ENCODE measurements at regions of chrX and their contacts with region 1.

Region 1: GRCh38 chrX:110167952-110168451 is 149.9 kb downstream of the AMMECR1 start:
- DNase-seq: peak in 7 of 10 donors; percentile 32 to 90 (median 39)

Region 2: DNA sequence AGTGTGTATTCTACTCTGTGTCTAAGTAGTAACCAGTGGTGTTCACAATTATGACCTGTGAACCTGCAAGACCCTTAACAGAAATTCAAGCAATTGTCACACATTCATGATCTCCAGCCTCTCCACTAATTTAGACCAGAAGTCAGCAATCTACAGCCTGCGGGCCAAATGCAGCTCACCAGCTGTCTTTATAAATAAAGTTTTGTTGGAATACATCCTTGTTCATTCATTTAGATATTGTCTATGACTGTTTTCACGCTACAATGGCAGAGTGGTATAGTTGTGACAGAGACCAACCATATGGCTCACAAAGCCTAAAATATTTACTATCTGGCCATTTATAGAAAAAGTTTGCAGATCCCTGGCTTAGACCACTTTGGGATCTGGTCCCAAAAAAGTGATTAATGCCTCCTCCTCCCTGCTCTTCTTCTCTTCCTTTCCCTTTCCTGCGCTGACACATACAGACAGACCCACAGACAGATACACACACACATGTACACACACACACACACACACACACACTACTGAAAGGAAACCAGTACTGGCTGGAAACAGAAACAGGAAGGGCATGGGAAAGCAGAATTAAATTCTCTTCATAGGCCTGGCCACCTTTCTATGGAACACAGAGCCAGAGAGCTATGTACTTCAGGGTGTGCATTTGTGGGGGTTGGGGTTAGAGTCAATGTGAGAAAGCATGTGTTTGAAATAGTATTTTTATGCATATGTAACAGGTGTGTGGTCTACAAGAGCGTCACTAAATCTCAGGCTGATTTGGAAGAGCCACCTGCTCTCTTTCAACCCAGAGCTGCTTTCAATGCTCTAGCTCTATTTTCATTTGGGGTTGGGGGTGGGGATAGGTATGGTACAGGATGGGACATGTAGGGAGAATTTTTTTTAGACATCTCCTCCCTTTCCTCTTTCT is 214.8 kb before region 1 on chrX:
- intact Hi-C with region 1: no loop called
- DNase-seq: no peak

Region 3: DNA sequence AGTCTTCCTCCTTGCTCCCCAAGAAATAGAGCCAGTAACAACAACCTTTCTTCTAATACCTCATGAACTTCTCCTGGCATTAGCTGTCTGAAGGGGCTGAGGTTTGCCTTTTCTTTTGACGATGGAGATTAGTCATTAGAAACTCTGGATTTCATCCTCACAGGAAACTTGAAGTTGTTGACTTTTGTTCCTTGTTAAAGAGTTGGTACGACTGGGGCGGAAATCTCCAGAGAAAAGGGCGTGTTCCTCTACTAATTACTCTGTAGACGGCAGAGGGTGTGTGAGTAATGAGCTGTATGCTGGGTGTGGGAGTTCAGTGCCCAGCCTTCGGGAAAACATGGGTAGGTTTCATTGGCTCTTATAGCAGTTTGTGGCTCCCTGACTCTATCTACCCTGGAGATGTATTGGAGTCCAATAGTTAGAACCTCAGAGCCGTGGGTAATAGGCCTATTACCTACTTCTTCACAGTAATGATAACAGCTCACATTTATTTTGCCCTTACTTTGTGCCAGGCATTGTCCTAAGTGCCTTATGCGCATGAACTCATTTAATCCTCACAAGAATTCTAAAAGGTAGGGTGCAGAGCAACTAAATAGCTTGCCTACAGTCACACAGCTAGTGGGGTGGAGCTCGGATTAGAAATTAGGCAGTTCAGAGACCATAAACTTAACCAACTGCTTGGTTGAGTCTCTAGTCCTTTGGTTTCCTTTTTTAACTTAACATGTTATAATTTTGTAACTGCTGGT is 141.7 kb before region 1 on chrX:
- intact Hi-C with region 1: no loop called
- DNase-seq: no peak

Region 4: DNA sequence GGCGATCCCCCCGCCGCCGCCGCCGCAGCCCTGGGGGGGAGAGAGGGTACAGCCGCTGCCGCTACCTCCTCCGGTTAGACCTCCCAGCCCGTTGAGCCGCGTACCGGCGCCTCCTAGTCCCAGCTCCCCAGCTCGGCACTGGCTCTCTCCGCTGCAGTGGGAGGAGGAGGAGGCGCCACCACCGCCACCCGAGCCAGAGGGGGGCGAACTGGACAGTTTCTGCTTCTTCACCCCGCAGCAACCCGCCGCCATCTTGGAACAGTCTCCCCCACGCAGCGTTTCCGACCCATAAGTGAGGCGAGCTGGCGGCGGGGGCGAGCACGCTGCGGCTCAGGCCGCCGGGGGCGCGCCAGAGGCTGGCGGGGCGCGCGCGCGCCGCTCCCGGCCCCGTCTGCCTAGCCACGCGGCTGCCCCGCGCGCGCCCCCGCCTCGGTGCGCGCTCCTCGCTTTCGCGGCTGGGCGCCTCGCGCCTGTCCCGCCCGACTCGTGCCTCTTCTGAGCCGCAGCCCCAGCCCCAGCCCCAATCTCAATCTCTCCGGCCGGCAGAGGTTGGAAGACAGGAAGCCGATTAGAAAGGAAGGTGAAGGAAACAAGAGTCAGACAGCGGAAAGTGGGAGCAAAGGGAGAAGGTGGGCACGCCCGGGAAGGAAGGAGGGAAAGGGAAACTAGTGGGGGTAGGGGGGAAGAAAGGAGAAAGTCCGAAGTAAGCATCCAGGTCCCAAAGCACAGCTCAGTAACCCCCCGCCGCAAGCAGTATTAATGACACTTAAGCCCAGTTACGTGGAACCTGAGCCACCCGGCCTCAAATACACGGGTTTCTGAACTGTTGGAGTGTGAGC is 150.0 kb after region 1 on chrX and contains the start of gene AMMECR1:
- intact Hi-C with region 1: loop called (anchors 10 kb)
- DNase-seq: peak; percentile 54 to 96 (median 71)

Region 5: GRCh38 chrX:110847334-110847733 is 679.3 kb after region 1 on chrX:
- intact Hi-C with region 1: loop called (anchors 5 kb)
- DNase-seq: no peak